Ascending aorta (tissue), 2 donors: ENCODE measurements at regions of chr1 and their contacts with region 1.

Region 1: GRCh38 chr1:203692565-203693470 is 66.2 kb downstream of the ATP2B4 start:
- DNase-seq: peak; percentile 76 to 96
- H3K4me3 ChIP-seq: no peak overlapping the region
- H3K27ac ChIP-seq: peak overlapping the region; percentile 82 to 87
- H3K4me1 ChIP-seq: peaks cover 17 to 38% of the 10 kb centered on the region in 2 donors
- H3K27me3 ChIP-seq: no peaks in the 10 kb centered on the region
- CTCF ChIP-seq: no peak

Region 2: GRCh38 chr1:203590574-203590973 is 102.2 kb before region 1 on chr1:
- intact Hi-C with region 1: no loop called
- DNase-seq: no peak
- H3K4me3 ChIP-seq: no peak overlapping the region
- H3K27ac ChIP-seq: no peak overlapping the region
- H3K4me1 ChIP-seq: no peaks in the 10 kb centered on the region
- H3K27me3 ChIP-seq: no peaks in the 10 kb centered on the region
- CTCF ChIP-seq: no peak

Region 3: DNA sequence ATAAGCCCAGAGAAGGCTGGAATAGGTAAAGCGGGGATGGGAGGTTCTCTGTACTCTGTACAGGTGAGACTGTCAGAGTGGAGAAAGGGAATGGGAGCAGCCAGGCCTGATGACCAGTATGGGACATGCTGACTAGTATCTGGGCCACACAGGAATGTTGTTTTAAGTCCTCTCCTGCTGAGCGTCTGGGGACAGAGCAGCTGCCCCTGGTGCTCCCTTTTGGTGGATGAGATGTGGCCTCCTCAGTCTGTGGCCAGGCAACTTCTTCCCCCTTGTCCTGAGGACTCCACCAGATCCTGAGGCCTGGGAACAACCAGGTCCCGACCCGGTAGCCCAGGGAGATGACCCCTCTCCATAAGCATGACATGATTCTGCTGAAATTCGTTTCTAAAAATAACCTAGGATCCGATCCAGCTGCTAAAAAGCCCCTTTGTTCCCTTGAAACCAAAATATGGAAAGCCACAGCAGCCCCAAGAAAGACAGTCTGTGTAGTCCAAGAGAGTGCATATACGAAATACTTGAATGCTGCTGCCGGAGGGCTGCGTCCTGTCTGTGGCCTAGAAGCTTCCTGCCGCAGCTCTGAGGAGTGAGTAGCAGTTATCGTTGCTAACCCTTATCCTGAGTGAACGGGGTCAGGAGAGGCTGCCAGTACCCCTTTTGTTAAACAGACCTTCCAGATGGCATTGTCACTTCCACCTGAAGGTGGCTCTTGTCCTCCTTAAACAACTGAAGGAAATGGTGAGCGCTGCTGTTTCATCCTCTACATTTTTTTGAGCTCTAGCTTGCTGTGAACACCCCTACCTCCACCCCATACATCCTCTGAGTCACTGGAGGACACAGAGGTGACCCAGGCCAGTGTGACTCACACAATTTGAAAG is 19.0 kb before region 1 on chr1:
- intact Hi-C with region 1: loop called (anchors 2 kb)
- DNase-seq: peak; percentile 49 to 89
- H3K4me3 ChIP-seq: no peak overlapping the region
- H3K27ac ChIP-seq: peak overlapping the region; percentile 82 to 93
- H3K4me1 ChIP-seq: peaks cover 15 to 56% of the 10 kb centered on the region in 2 donors
- H3K27me3 ChIP-seq: no peaks in the 10 kb centered on the region
- CTCF ChIP-seq: peak in 1 of 3 experiments; percentile 7